ENCODE measurements at regions of chr2 and their contacts with region 1.

Region 1: DNA sequence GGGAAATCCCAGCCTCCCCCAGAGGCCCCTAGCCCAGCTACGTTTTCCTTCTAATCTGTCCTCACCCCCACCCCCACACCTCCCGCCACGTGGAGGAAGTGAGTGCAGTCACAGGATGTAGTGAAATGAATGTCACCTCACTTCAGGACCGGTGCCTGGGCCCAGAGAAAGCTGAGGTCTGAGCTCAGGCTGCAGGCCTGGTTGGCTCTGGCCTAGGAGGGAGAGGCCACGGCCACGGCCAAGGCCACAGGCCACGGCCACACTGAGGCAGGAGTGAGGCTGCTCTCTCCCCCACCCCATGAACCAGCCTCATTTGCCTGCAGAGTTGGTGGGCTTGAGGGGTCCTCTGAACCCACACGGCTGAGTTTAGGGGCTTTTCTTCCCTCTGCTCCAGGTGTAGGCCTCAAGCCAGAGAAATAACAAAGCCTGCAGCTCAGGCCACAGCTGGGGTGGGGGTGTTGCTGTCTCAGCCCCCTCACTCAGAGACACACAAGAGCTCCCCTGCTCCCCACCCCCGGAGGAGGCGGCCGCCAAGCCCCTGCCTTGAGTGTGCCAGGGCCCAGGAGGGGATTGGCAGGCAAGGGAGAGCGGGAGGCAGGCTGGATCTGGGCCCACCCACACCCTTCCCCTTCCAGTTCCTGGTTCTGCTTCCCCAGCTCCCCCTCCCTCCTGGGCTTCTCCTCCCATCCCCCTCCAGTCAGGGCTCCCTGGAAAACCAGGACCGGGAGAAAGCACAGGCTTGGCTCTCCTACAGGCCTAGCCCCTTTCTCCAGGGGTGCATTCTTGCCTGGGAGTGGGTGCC is 27.0 kb downstream of the DNMT3A start:
- DNase-seq: peak; percentile 21 to 80 (median 69)
- ATAC-seq: peak; percentile 86
- H3K4me3 ChIP-seq: peak overlapping the region; percentile 34 to 46
- H3K4me3 Mint-ChIP-seq: peak overlapping the region; percentile 81
- H3K27ac ChIP-seq: peak overlapping the region; percentile 32 to 76
- H3K27ac Mint-ChIP-seq: peak overlapping the region; percentile 95
- H3K4me1 ChIP-seq: peaks cover 71% of the 10 kb centered on the region
- H3K4me1 Mint-ChIP-seq: peaks cover 66% of the 10 kb centered on the region
- H3K27me3 ChIP-seq: no peaks in the 10 kb centered on the region
- H3K27me3 Mint-ChIP-seq: no peaks in the 10 kb centered on the region
- CTCF ChIP-seq: no peak

Region 2: DNA sequence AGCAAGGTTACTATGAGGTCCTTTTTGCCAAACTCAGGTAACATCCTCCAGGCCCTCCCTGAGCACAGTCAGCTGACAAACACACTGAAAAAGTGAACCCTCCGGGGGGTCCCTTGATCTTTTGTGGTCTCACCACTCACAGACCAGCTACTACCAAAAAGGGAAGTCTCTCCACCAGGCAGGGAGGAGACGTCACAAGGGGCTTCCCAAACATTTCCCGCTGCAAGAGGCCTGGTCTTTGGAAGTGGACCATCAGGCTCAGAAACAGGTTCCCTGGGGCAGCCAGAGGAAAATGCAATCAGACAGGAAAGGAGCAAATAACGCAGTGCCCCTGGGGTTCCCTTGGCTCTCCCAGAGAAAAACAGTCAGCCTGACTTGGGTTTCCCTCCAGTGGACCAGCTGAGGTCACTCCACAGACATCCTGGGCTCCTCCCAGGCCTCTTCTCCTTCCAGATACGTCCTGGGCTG is 107.6 kb before region 1 on chr2:
- CTCF ChIA-PET with region 1: no interaction called
- POLR2A ChIA-PET with region 1: no interaction called
- intact Hi-C with region 1: no loop called
- DNase-seq: peak in 4 of 9 experiments; percentile 30 to 71 (median 39)
- ATAC-seq: peak; percentile 47
- H3K4me3 ChIP-seq: no peak overlapping the region
- H3K4me3 Mint-ChIP-seq: no peak overlapping the region
- H3K27ac ChIP-seq: no peak overlapping the region
- H3K27ac Mint-ChIP-seq: no peak overlapping the region
- H3K4me1 ChIP-seq: peaks cover 37% of the 10 kb centered on the region
- H3K4me1 Mint-ChIP-seq: peaks cover 44% of the 10 kb centered on the region
- H3K27me3 ChIP-seq: no peaks in the 10 kb centered on the region
- H3K27me3 Mint-ChIP-seq: no peaks in the 10 kb centered on the region
- CTCF ChIP-seq: no peak

Region 3: DNA sequence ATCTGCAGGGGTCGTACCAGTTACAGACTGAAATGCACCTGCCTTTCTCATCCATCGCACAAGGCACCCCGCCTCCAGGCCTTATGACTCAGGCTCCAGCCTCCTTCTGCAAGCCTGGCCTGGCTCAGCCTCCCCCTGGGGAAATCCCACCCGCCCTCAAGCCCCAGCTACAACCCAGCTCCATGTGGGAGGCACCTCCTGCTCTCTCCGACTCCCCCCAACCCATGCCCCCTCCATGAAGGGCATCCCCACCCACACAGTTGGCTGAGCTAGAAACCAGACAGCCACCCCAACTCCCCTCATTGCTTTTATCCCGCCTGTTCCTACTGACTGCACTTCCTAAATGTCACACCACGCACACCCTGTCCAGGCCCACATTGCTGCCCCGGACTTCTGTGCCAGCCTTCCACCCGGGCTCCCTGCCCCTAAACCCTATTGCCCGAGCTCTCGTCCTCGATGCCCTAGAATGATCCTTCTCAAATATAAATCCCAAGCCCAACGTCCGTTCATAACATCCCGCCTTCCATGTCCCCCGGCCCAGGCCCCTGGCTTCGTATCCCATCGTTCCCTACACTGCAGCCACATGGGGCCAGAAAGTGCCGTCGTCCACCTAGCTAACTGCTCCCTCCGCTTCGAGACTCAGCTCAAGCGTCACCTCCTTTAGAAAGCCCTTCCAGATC is 17.1 kb after region 1 on chr2:
- CTCF ChIA-PET with region 1: interaction called, 23 read pairs
- POLR2A ChIA-PET with region 1: interaction called, 7 read pairs
- intact Hi-C with region 1: loop called in 1 of 2 experiments (anchors 2 kb)
- DNase-seq: peak in 1 of 9 experiments; percentile 41
- ATAC-seq: no peak
- H3K4me3 ChIP-seq: no peak overlapping the region
- H3K4me3 Mint-ChIP-seq: no peak overlapping the region
- H3K27ac ChIP-seq: no peak overlapping the region
- H3K27ac Mint-ChIP-seq: peak overlapping the region; percentile 83
- H3K4me1 ChIP-seq: peaks cover 73% of the 10 kb centered on the region
- H3K4me1 Mint-ChIP-seq: peaks cover 68% of the 10 kb centered on the region
- H3K27me3 ChIP-seq: no peaks in the 10 kb centered on the region
- H3K27me3 Mint-ChIP-seq: no peaks in the 10 kb centered on the region
- CTCF ChIP-seq: no peak

Region 4: GRCh38 chr2:25337276-25337675 is 22.6 kb after region 1 on chr2:
- CTCF ChIA-PET with region 1: interaction called, 23 read pairs
- POLR2A ChIA-PET with region 1: interaction called, 6 read pairs
- intact Hi-C with region 1: loop called (anchors 1 to 2 kb)
- DNase-seq: peak in 2 of 9 experiments; percentile 26 to 45
- ATAC-seq: peak; percentile 12
- H3K4me3 ChIP-seq: peak overlapping the region in 1 of 2 experiments; percentile 4
- H3K4me3 Mint-ChIP-seq: peak overlapping the region; percentile 60
- H3K27ac ChIP-seq: peak overlapping the region; percentile 17 to 53
- H3K27ac Mint-ChIP-seq: peak overlapping the region; percentile 87
- H3K4me1 ChIP-seq: peaks cover 81% of the 10 kb centered on the region
- H3K4me1 Mint-ChIP-seq: peaks cover 69% of the 10 kb centered on the region
- H3K27me3 ChIP-seq: no peaks in the 10 kb centered on the region
- H3K27me3 Mint-ChIP-seq: no peaks in the 10 kb centered on the region
- CTCF ChIP-seq: no peak

Region 5: DNA sequence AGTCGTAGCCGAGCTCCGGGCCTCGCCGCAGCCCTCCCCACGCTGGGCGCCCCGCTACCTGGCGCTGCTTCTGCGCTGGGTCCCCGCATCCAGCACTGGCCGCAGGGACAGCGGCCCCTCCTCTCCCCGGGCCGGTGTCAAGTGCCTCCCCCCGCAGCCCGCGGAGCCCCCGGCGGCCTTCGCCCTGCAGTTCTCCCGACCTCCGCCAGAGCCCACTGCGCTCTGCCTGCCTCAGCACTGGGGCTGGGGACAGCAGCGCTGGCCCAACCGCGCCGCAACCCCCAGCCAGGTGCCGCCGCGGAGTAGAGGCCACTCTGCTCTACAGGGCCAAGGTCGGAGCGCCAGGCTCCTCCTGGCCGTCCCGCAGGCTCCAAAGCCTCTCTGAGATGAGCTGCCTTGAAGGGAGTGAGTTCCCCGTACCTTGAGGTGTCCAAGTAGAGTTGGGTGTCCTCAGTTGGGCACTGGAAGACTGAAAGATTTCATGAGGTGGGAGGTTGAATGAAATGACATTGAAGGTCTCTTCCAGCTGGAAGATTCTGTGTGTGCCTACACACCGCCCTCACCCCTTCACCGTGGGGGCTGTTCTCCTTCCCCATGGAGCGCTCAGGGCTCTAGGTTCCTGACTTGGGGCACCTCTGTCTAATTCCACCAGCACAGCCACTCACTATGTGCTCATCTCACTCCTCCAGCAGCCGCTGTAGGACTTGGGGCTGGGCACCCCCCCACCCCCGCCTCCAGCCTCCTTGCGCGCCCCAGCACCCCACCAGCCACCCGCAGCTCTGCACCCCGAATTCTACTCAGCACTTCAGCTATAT is 27.9 kb after region 1 on chr2:
- CTCF ChIA-PET with region 1: interaction called, 23 read pairs
- POLR2A ChIA-PET with region 1: interaction called, 6 read pairs
- intact Hi-C with region 1: loop called (anchors 1 to 2 kb)
- DNase-seq: peak; percentile 62 to 91 (median 80)
- ATAC-seq: peak; percentile 85
- H3K4me3 ChIP-seq: peak overlapping the region; percentile 22 to 53
- H3K4me3 Mint-ChIP-seq: peak overlapping the region; percentile 85
- H3K27ac ChIP-seq: no peak overlapping the region
- H3K27ac Mint-ChIP-seq: peak overlapping the region; percentile 77
- H3K4me1 ChIP-seq: peaks cover 42% of the 10 kb centered on the region
- H3K4me1 Mint-ChIP-seq: peaks cover 33% of the 10 kb centered on the region
- H3K27me3 ChIP-seq: no peaks in the 10 kb centered on the region
- H3K27me3 Mint-ChIP-seq: no peaks in the 10 kb centered on the region
- CTCF ChIP-seq: peak; percentile 87